Dorsolateral prefrontal cortex (tissue), 120 donors: ENCODE measurements at regions of chr6 and their contacts with region 1.

Region 1: DNA sequence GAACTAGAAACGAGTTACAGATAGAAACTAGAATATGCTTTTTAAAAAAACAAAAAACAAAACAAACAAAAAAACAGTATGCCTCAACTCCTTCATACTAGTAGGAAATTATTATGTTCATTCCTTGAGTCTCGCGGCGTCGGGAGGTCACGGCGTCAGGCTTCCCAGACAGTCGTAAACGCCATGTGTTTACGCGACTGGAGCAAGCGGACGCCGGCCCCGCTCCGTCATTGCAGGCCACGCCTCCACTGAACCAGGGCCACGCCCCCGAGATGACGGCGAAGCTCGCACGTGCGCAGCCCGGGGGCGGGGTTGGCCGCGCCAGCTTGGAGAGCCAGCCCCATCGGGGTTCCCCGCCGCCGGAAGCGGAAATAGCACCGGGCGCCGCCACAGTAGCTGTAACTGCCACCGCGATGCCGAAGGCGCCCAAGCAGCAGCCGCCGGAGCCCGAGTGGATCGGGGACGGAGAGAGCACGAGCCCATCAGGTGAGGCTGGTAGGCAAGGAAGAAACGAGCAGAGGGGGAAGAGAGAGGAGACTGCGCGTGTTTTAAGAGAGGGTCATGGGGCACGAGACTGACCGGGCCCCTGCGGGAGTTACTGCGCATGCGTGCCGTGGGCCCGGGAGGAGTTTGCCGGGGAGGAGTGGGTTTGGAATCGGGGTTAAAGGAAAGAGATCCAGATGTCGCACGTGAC is at the start of gene ABCF1:
- DNase-seq: peak; percentile 97 to 100 (median 98)
- H3K4me3 ChIP-seq: peak within 1 kb of the TSS; percentile 60 to 99 (median 84)
- H3K27ac ChIP-seq: peak within 1 kb of the TSS; percentile 16 to 95 (median 87)
- H3K27me3 ChIP-seq: no peaks in the 10 kb centered on the region
- CTCF ChIP-seq: peak in 27 of 56 donors; percentile 1 to 53 (median 28)
- total RNA-seq, gene ABCF1: 24.2 to 44.5 (median 34.1) TPM

Region 2: DNA sequence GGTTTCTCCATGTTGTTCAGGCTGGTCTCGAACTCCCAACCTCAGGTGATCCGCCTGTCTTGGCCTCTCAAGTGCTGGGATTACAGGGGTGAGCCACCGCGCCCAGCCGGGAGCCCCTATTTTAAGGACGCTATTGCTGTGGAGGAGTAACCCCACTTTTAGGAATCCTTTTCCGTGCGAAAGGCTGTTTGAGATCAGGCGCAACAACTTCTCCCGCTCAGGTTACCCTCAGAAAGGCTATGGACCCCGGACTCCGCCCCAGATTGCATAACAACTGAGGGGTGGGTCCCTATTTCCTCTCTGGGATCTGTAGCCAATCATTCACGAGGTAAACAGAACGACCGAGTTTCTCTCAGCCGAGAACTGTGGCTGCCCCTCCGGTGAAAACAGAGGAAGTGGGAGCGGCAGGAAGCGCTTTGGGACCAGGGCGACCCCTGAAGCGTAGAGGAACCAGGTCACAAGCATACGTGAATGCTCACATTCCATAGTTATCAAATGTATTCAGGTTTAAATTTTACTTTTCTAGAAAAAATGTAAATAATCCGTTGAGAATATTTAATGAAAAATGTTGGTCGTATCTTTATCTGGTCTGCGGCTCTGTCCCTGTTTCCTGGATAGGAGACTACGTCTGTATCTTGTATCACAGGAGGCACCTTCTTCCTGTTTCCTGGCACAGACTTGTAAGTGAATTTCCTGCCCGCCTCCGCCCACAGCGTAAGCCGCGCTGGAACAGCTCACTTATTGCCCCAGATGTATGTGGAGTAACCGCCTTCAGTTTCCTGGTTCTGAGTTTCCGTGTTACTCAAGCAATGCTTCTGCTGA is 55.1 kb before region 1 on chr6:
- intact Hi-C with region 1: no loop called
- DNase-seq: peak; percentile 11 to 78 (median 60)
- H3K4me3 ChIP-seq: peak overlapping the region; percentile 18 to 62 (median 46)
- H3K27ac ChIP-seq: peak overlapping the region in 57 of 59 donors; percentile 2 to 93 (median 77)
- H3K27me3 ChIP-seq: peaks cover 0 to 40% (median 0%) of the 10 kb centered on the region in 45 donors
- CTCF ChIP-seq: peak in 1 of 56 donors; percentile 13

Region 3: DNA sequence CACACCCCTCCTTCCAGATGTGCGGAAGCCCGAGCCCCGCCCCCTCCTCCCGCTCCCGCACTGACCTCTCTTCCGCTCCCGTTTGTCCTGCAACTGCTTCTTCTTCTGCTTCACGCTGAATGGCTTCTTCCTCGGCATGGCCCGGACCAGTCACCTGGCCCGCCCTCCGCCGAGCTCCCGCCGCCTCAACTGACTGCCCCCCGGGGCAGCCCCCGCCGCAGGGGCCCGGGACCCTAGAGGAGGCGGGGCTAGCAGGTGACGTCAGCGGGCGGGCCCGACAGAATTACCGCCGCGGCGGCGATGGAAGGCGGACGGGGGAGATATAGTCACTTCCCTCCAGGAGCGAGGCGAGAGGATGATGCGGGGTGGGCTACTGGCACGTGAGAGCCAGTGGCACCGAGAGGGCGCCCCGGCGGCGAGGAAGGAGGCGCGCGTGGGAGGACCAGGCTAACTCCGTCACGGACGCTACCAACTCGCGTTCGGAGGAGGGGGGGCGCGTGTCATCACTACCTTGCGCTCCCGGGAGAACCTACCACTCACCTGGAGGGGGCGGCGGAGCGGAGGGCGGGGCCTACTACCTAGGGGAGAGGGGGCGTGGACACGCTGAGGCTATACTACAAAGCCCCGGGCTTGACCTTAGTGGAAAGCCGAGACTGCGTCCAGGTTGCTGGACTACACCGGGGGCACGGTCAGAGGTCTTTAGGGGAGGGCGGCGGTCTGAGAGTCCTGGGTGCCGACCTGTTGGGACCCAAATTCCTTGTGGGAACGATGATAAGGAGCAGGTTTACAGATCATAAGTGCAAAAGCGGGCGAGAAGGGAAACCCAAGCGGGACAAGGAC is 14.9 kb before region 1 on chr6 and contains the start of gene GNL1:
- intact Hi-C with region 1: loop called (anchors 1 to 2 kb)
- DNase-seq: peak; percentile 87 to 95 (median 92)
- H3K4me3 ChIP-seq: peak within 1 kb of the TSS; percentile 69 to 100 (median 95)
- H3K27ac ChIP-seq: peak within 1 kb of the TSS; percentile 73 to 100 (median 97)
- H3K27me3 ChIP-seq: no peaks in the 10 kb centered on the region
- CTCF ChIP-seq: peak in 1 of 56 donors; percentile 17
- total RNA-seq, gene GNL1: 56.1 to 116 (median 87.5) TPM

Region 4: DNA sequence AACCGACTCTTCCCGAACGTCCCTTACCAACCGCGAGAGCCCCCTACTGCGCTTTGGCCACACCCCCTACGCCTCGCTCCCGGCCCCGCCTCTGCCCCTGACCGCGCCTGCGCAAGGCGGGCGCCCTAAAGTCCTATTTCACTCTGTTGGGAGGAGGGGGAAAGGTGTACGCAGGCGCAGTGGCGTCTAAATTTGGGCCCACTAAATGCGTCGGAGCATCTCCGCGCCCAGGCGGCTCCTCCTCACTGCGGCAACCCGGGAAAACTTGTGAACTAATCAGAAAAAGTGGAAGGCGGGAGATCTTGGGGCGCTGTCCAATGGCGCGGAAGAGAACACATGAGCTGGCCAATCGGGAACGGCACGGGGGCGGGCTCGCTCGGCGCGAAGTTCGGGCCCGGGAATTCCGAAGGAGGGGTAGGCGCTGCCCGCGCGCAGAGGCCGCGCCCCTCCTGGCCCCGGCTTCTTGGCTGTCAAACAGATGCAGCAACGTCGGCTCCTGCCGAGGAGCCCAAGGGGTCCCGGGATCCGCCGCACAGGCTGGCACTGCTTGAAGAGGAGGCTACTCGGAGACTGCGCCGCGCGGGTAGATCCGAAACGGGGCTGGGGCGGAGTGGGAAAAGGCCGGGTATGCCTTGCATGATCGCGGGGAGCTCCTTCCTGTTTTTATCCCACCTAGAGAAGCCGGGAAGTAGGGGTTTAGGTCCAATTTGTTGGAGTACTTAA is 587.1 kb after region 1 on chr6 and contains the start of gene TCF19:
- intact Hi-C with region 1: loop called in 1 of 2 experiments (anchors 10 kb)
- DNase-seq: peak; percentile 93 to 98 (median 98)
- H3K4me3 ChIP-seq: peak within 1 kb of the TSS; percentile 60 to 93 (median 79)
- H3K27ac ChIP-seq: peak within 1 kb of the TSS in 31 of 59 donors; percentile 9 to 81 (median 53)
- H3K27me3 ChIP-seq: no peaks in the 10 kb centered on the region
- CTCF ChIP-seq: peak in 25 of 56 donors; percentile 5 to 57 (median 22)
- total RNA-seq, gene TCF19: 0.80 to 6.6 (median 2.3) TPM

Region 5: GRCh38 chr6:31585491-31585890 is 1014.3 kb after region 1 on chr6:
- intact Hi-C with region 1: no loop called
- DNase-seq: no peak
- H3K4me3 ChIP-seq: no peak overlapping the region
- H3K27ac ChIP-seq: peak overlapping the region in 11 of 59 donors; percentile 8 to 61 (median 42)
- H3K27me3 ChIP-seq: peaks cover 0 to 4% (median 0%) of the 10 kb centered on the region in 45 donors
- CTCF ChIP-seq: peak in 4 of 56 donors; percentile 10 to 18 (median 12)